ENCODE measurements at regions of chr11 and their contacts with region 1.

Region 1: DNA sequence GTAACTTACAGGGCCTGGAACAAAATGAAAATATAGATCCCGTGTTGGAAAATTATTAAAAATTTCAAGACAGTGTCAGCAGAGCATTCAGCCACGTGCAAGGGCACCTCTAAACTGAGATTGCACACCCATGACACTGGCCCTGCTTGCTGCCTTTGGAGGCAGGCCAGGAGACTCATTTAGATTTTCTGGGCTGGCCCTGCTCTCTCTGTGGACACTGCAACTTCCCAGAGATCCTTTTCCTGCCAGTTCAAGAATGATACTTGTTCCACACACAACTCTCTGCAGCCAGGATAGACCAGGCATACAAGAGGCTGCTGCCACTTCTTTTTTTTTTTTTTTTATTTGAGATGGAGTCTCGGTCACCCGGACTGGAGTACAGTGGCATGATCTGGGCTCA is 56.7 kb upstream of the PTPRJ start:
- DNase-seq: peak; percentile 51
- ATAC-seq: peak; percentile 13
- H3K4me3 ChIP-seq: no peak overlapping the region
- H3K27ac ChIP-seq: peak overlapping the region; percentile 44
- H3K4me1 ChIP-seq: peaks cover 13% of the 10 kb centered on the region
- H3K27me3 ChIP-seq: no peaks in the 10 kb centered on the region
- CTCF ChIP-seq: no peak
- POLR2A ChIP-seq: no peak
- RAD21 ChIP-seq: no peak

Region 2: GRCh38 chr11:47869546-47870393 is 53.9 kb before region 1 on chr11:
- CTCF ChIA-PET with region 1: no interaction called
- POLR2A ChIA-PET with region 1: interaction called, 10 read pairs
- dilution Hi-C with region 1: no loop called
- in situ Hi-C with region 1: no loop called
- intact Hi-C with region 1: no loop called
- DNase-seq: no peak
- ATAC-seq: no peak
- H3K4me3 ChIP-seq: no peak overlapping the region
- H3K27ac ChIP-seq: no peak overlapping the region
- H3K4me1 ChIP-seq: no peaks in the 10 kb centered on the region
- H3K27me3 ChIP-seq: no peaks in the 10 kb centered on the region
- CTCF ChIP-seq: no peak
- POLR2A ChIP-seq: no peak
- RAD21 ChIP-seq: no peak